RWPE1 (cell line): ENCODE measurements at regions of chr15 and their contacts with region 1.

Region 1: DNA sequence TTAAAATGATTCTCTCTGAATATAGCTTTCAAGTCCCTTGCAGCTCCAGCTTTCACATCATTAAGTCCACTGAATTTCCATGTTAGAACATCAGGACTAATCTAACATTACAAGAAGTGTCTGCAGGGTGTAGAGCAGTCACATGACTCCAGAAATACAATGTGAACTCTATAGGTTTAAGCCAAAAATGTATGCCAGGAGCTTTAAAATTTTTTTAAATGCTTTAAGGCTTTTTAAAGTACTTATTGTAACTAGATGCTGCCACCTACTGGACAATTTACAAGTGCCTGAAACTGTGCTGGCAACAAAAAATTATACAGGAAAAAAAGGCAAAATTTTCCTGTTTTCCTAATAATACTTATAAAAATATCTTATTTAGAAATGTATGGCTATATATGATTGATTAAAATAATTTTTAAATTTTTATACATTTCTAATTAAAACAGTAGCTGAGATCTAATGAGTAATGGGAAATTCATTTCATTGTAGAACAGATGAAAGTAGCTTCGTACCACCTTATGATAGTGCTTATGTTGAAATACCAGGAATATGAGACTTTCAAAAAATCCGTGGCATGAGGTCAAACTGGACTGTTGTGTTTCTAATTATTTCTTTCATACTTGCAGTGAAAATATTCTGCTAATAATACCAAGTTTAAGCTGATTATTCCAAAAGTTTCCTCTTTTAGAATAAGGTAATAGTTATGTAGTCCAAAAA is 25.7 kb downstream of the FSIP1 start:
- DNase-seq: peak; percentile 42
- H3K27ac ChIP-seq: no peak overlapping the region
- CTCF ChIP-seq: peak; percentile 86

Region 2: GRCh38 chr15:38707802-38708671 is 1048.9 kb before region 1 on chr15:
- CTCF ChIA-PET with region 1: interaction called, 17 read pairs
- POLR2A ChIA-PET with region 1: no interaction called
- DNase-seq: peak; percentile 54
- H3K27ac ChIP-seq: no peak overlapping the region
- CTCF ChIP-seq: peak; percentile 82

Region 3: DNA sequence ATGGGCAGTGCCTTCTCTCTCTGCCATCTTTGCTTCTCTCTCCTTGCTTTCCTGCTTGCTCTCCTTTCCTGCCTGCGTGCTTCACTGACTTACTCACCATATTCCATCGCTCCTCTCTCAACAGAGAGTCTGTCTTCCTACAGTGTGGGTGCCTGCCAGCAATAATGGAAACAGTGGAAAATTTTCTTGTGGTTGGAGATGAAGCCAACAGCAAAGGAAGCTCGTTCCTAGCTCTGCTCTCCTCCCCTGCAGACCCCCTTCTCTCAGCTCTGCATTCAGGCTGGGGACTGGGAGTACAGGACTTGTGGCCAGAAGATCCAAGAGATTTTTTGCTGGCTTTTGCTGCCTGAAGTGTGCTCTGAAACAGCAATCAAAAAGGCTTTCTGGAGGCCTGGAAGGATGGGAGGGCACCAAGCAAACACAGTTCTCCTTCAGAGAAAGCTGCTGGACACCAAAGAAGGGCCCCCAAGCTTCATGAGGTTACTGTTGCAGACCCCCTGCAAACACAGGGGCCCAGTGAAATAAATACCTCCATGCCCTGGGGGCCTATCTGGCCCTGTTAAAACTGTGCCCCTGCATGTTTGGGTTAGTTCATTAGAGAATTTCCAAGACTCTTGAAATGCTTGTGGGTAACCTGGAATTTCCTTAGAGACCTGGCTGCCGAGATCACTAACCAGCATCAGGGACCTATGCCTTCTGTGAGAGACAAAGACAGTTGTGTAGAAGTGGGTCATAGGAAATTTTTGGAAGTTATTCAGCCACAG is 1042.5 kb before region 1 on chr15:
- CTCF ChIA-PET with region 1: interaction called, 10 read pairs
- POLR2A ChIA-PET with region 1: no interaction called
- DNase-seq: peak; percentile 21
- H3K27ac ChIP-seq: peak overlapping the region; percentile 32; the same call in 1 of the 2 replicates
- CTCF ChIP-seq: no peak

Region 4: DNA sequence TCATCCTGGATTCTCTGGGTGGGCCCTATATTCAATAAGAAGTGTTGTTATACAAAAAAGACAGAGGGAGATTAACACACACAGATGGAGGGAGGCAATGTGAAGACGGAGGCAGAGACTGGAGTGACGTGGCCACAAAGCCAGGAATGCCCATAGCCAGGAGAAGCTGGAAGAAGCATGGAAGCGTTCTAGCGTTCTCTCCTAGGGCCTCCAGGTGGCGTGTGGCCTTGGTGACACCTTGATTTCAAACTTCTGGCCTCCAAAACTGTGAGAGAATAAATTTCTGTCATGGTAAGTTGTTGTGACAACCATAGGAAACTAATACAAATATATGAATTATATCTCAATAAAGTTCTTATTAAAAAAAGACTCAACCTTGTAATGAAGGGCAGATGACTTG is 154.8 kb before region 1 on chr15:
- CTCF ChIA-PET with region 1: interaction called, 15 read pairs
- POLR2A ChIA-PET with region 1: no interaction called
- DNase-seq: no peak
- H3K27ac ChIP-seq: no peak overlapping the region
- CTCF ChIP-seq: no peak

Region 5: GRCh38 chr15:39686000-39686613 is 70.9 kb before region 1 on chr15:
- CTCF ChIA-PET with region 1: interaction called, 43 read pairs
- POLR2A ChIA-PET with region 1: no interaction called
- DNase-seq: peak; percentile 46
- H3K27ac ChIP-seq: no peak overlapping the region
- CTCF ChIP-seq: peak; percentile 91

Region 6: DNA sequence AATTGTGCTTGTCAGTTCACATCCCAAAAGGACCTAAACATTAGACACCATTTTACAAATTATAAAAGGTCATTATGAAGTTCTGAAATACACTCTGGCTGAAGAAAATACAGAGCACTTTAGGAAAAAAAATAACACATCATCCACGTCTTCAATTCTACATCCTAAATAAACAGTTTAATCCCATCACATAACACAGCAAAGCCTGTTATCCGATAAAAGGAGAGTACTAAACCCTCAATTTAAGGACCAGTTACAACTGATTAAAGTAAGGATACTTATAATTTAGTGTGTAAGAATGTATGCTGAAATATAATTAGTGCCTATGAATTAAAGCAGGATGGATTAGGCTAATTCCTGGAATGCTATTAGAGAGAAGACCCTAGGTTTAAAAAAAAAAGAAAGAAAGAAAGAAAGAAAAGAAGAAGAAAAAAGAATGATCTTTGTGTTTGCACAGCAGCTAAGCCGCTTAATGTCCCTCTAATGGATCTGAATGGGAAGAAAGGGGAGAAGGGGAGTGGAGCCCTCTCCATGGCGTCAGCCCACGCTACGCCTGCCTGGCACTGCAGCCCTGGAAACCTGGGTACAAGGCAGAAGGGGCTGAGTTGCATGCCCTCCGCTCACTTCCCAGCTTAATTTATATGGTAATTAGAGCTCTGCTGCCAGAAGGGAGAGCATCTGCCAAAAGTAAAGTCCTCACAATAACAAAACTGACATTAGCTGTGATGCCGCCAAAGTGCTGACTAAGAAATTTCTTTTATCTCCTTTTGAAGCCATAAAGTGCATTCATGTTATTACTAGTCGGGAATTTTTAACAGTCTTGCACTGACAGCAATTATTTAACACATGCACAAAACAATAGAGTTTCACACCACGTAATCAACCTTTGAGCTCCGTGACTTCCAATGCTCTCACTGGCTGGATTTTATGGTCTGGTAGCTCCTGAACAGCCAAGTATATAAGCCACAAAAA is 64.3 kb before region 1 on chr15:
- CTCF ChIA-PET with region 1: interaction called, 12 read pairs
- POLR2A ChIA-PET with region 1: no interaction called
- DNase-seq: no peak
- H3K27ac ChIP-seq: no peak overlapping the region
- CTCF ChIP-seq: no peak

Region 7: GRCh38 chr15:39741258-39741657 is 15.7 kb before region 1 on chr15:
- CTCF ChIA-PET with region 1: interaction called, 15 read pairs
- POLR2A ChIA-PET with region 1: no interaction called
- DNase-seq: no peak
- H3K27ac ChIP-seq: no peak overlapping the region
- CTCF ChIP-seq: no peak

Region 8: GRCh38 chr15:39828374-39828931 is 71.5 kb after region 1 on chr15:
- CTCF ChIA-PET with region 1: no interaction called
- POLR2A ChIA-PET with region 1: no interaction called
- DNase-seq: peak; percentile 11
- H3K27ac ChIP-seq: no peak overlapping the region
- CTCF ChIP-seq: no peak

Region 9: DNA sequence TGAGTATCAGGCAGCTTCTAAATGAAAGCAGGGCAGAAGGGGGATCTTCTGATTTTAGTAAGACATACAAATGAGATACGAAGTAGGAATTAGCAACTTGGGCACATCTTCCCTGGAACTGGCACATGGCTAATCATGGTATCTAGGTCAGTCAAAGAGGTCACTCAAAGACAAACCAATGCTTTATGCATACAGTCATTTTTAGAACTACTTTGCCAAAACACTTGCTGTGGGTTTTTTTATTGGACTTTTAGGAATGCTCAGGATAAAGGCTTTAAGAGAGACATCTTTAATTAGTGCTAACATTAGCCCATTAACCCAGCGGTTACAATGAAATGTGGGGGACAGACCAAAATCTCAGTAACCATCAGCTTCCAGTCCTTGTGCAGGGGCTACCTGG is 111.4 kb after region 1 on chr15:
- CTCF ChIA-PET with region 1: no interaction called
- POLR2A ChIA-PET with region 1: no interaction called
- DNase-seq: no peak
- H3K27ac ChIP-seq: no peak overlapping the region
- CTCF ChIP-seq: no peak